Naive thymus-derived CD4-positive, alpha-beta T cell (primary cell): ENCODE measurements at regions of chr14 and their contacts with region 1.

Region 1: GRCh38 chr14:22852940-22853767 is 16.8 kb downstream of the MMP14 start:
- DNase-seq: peak; percentile 75 to 94 (median 87)
- ATAC-seq: peak; percentile 96
- H3K4me3 ChIP-seq: peak overlapping the region; percentile 74
- H3K4me3 Mint-ChIP-seq: peak overlapping the region; percentile 81 to 89 (median 86)
- H3K27ac ChIP-seq: peak overlapping the region; percentile 72
- H3K27ac Mint-ChIP-seq: peak overlapping the region in 7 of 9 donors; percentile 71 to 85 (median 81)
- H3K4me1 ChIP-seq: peaks cover 3% of the 10 kb centered on the region in 2 donors
- H3K4me1 Mint-ChIP-seq: peaks cover 8 to 30% (median 21%) of the 10 kb centered on the region in 7 donors
- H3K27me3 ChIP-seq: no peaks in the 10 kb centered on the region
- H3K27me3 Mint-ChIP-seq: peaks cover 0 to 19% (median 6%) of the 10 kb centered on the region in 5 donors

Region 2: GRCh38 chr14:22653012-22653621 is 200.0 kb before region 1 on chr14:
- CTCF ChIA-PET with region 1: interaction called, 3 read pairs
- POLR2A ChIA-PET with region 1: no interaction called
- intact Hi-C with region 1: loop called (anchors 1 kb)
- DNase-seq: peak; percentile 17 to 54 (median 42)
- ATAC-seq: peak; percentile 87
- H3K4me3 ChIP-seq: no peak overlapping the region
- H3K4me3 Mint-ChIP-seq: no peak overlapping the region
- H3K27ac ChIP-seq: no peak overlapping the region
- H3K27ac Mint-ChIP-seq: no peak overlapping the region
- H3K4me1 ChIP-seq: no peaks in the 10 kb centered on the region
- H3K4me1 Mint-ChIP-seq: peaks cover 0 to 3% (median 0%) of the 10 kb centered on the region in 7 donors
- H3K27me3 ChIP-seq: no peaks in the 10 kb centered on the region
- H3K27me3 Mint-ChIP-seq: no peaks in the 10 kb centered on the region

Region 3: GRCh38 chr14:22836301-22837113 is 16.6 kb before region 1 on chr14 and contains the start of gene MMP14:
- CTCF ChIA-PET with region 1: interaction called, 9 read pairs
- POLR2A ChIA-PET with region 1: interaction called, 5 read pairs
- intact Hi-C with region 1: loop called in 1 of 2 experiments (anchors 1 kb)
- DNase-seq: peak in 1 of 9 donors; percentile 6
- ATAC-seq: no peak
- H3K4me3 ChIP-seq: peak within 1 kb of the TSS; percentile 56
- H3K4me3 Mint-ChIP-seq: peak within 1 kb of the TSS; percentile 57 to 95 (median 90)
- H3K27ac ChIP-seq: peak within 1 kb of the TSS; percentile 26
- H3K27ac Mint-ChIP-seq: peak within 1 kb of the TSS; percentile 51 to 97 (median 75)
- H3K4me1 ChIP-seq: peaks cover 0 to 13% of the 10 kb centered on the region in 2 donors
- H3K4me1 Mint-ChIP-seq: peaks cover 9 to 35% (median 25%) of the 10 kb centered on the region in 7 donors
- H3K27me3 ChIP-seq: no peaks in the 10 kb centered on the region
- H3K27me3 Mint-ChIP-seq: peaks cover 0 to 31% (median 6%) of the 10 kb centered on the region in 5 donors
- total RNA-seq, gene MMP14: 1.8 to 6.6 (median 2.0) TPM

Region 4: GRCh38 chr14:22872033-22872832 is 19.1 kb after region 1 on chr14:
- CTCF ChIA-PET with region 1: interaction called, 8 read pairs
- POLR2A ChIA-PET with region 1: interaction called, 29 read pairs
- intact Hi-C with region 1: loop called (anchors 1 to 2 kb)
- DNase-seq: peak; percentile 55 to 76 (median 69)
- ATAC-seq: peak; percentile 57
- H3K4me3 ChIP-seq: peak overlapping the region; percentile 72
- H3K4me3 Mint-ChIP-seq: peak overlapping the region; percentile 87 to 98 (median 95)
- H3K27ac ChIP-seq: peak overlapping the region; percentile 86
- H3K27ac Mint-ChIP-seq: peak overlapping the region; percentile 83 to 98 (median 94)
- H3K4me1 ChIP-seq: peaks cover 20 to 33% of the 10 kb centered on the region in 2 donors
- H3K4me1 Mint-ChIP-seq: peaks cover 26 to 49% (median 29%) of the 10 kb centered on the region in 7 donors
- H3K27me3 ChIP-seq: no peaks in the 10 kb centered on the region
- H3K27me3 Mint-ChIP-seq: no peaks in the 10 kb centered on the region

Region 5: DNA sequence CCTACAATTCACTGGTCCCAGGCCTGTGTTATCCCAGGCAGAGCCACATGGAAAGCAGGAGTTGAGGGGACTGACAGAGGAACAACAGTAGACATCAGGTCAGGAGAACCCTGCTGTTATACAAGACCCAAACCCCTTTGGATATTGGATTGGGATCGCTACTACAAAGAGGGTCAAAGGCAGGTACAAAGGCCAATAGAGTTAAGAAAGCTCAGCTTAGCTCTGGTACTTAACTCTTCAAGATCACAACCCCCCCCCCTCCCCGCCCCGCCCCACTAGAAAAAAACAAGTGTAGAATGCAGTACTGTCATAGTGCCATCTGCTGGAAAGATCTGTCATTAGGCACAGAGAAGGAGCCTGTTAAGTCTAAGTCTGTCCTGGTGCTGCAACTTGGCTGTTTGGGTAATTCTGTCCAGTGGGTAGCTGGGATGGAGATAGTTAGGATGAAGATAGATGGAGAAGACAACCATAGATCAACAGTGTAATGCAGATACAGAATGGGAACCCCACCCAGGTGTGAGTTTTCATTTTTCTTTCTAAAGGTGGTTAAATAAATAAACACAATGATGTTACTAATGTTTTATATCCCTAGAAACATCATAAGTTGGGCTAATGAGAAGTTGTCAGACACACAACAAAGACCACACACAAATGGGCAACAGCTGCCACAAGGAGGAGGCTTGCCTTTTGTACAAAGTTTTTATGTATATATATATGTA is 47.1 kb after region 1 on chr14:
- CTCF ChIA-PET with region 1: interaction called, 42 read pairs
- POLR2A ChIA-PET with region 1: interaction called, 5 read pairs
- intact Hi-C with region 1: loop called in 1 of 2 experiments (anchors 1 kb)
- DNase-seq: peak in 7 of 9 donors; percentile 41 to 72 (median 66)
- ATAC-seq: peak; percentile 94
- H3K4me3 ChIP-seq: no peak overlapping the region
- H3K4me3 Mint-ChIP-seq: no peak overlapping the region
- H3K27ac ChIP-seq: peak overlapping the region; percentile 15
- H3K27ac Mint-ChIP-seq: peak overlapping the region in 8 of 9 donors; percentile 0 to 58 (median 35)
- H3K4me1 ChIP-seq: peaks cover 0 to 4% of the 10 kb centered on the region in 2 donors
- H3K4me1 Mint-ChIP-seq: peaks cover 10 to 24% (median 15%) of the 10 kb centered on the region in 7 donors
- H3K27me3 ChIP-seq: no peaks in the 10 kb centered on the region
- H3K27me3 Mint-ChIP-seq: no peaks in the 10 kb centered on the region